ENCODE measurements at regions of chr9 and their contacts with region 1.

Region 1: DNA sequence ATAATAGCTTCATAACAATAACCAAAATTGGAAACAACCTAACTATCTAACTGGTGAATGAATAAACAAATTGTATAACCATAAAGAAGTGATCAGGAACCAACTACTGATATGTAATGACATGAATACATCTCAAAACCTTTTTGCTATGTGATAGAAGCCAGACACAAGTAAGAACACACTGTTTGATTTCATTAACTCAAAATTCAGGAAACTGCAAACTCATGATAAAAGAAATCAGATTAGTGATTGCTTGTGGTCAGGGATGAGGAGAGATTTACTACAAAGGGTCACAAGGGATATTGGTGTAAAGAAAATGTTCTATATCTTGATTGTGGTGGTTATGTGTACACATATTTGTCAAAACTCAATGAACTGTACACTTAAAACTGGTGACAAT is 22.6 kb upstream of the BRINP1 start:
- DNase-seq: no peak
- ATAC-seq: no peak
- H3K4me3 ChIP-seq: no peak overlapping the region
- H3K27ac ChIP-seq: no peak overlapping the region
- H3K4me1 ChIP-seq: no peaks in the 10 kb centered on the region
- H3K27me3 ChIP-seq: no peaks in the 10 kb centered on the region
- CTCF ChIP-seq: no peak
- POLR2A ChIP-seq: no peak
- RAD21 ChIP-seq: no peak

Region 2: DNA sequence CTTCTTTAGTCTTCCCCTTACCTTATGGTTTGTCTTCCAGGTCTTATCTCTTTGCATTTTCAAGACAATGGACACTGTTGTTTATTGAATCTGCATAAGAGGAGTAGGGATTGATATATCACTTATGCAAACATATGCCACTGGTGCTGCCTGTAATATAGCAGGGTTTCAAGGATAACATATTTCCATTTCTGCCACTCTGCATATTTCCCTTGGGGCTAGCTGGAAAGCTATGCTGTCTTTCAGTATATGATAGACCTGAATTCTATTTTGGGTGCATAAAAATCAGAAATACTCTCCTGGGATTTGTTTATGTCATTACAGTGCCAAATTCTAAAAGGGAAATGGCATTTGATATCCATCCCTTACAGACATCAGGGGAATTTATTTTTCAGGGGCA is 1287.5 kb before region 1 on chr9:
- CTCF ChIA-PET with region 1: no interaction called
- POLR2A ChIA-PET with region 1: no interaction called
- dilution Hi-C with region 1: no loop called
- in situ Hi-C with region 1: no loop called
- intact Hi-C with region 1: no loop called
- DNase-seq: no peak
- ATAC-seq: no peak
- H3K4me3 ChIP-seq: no peak overlapping the region
- H3K27ac ChIP-seq: no peak overlapping the region
- H3K4me1 ChIP-seq: no peaks in the 10 kb centered on the region
- H3K27me3 ChIP-seq: no peaks in the 10 kb centered on the region
- CTCF ChIP-seq: no peak
- POLR2A ChIP-seq: no peak
- RAD21 ChIP-seq: no peak

Region 3: GRCh38 chr9:119500072-119500771 is 108.3 kb after region 1 on chr9:
- CTCF ChIA-PET with region 1: no interaction called
- POLR2A ChIA-PET with region 1: no interaction called
- dilution Hi-C with region 1: no loop called
- in situ Hi-C with region 1: no loop called
- intact Hi-C with region 1: no loop called
- DNase-seq: no peak
- ATAC-seq: no peak
- H3K4me3 ChIP-seq: no peak overlapping the region
- H3K27ac ChIP-seq: no peak overlapping the region
- H3K4me1 ChIP-seq: no peaks in the 10 kb centered on the region
- H3K27me3 ChIP-seq: no peaks in the 10 kb centered on the region
- CTCF ChIP-seq: no peak
- POLR2A ChIP-seq: no peak
- RAD21 ChIP-seq: no peak

Region 4: GRCh38 chr9:120490888-120491595 is 1099.2 kb after region 1 on chr9:
- CTCF ChIA-PET with region 1: no interaction called
- POLR2A ChIA-PET with region 1: no interaction called
- dilution Hi-C with region 1: no loop called
- in situ Hi-C with region 1: no loop called
- intact Hi-C with region 1: loop called (anchors 5 kb)
- DNase-seq: no peak
- ATAC-seq: no peak
- H3K4me3 ChIP-seq: no peak overlapping the region
- H3K27ac ChIP-seq: peak overlapping the region; percentile 23; the same call in 1 of the 2 replicates
- H3K4me1 ChIP-seq: no peaks in the 10 kb centered on the region
- H3K27me3 ChIP-seq: no peaks in the 10 kb centered on the region
- CTCF ChIP-seq: no peak
- POLR2A ChIP-seq: no peak
- RAD21 ChIP-seq: no peak

Measured in IMR-90 (cell line).